ENCODE measurements at regions of chr12 and their contacts with region 1.

Region 1: DNA sequence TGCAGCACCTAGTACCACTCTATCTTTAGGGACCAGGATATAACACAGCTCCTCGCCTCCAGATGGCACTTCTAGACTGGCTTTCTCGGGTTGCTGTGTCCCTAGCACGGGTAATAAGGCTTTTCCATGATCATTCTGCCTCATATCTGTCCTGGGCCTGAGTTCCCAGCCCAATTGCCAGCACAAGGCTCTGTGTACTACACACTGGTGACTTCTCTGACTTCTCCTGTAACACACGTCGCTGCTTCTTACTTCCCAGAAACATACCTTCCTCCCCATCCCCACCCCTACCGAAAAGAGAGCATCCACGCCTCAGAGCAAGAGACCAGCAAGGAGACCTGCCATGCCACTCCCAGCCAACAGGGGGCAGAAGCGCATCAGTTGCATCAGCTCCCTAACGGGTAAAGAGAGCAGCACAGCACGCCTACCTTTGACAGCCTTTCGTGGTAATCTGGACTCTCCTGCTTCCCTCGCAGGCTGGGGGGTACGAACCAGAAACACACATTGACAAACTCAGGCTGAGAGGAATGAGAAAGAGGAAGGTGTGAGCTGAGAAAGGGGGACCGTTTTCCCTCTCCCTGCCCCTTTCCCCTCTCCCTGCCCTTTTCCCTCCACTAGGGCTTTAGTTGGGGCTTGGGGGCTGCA is 21.2 kb upstream of the ZNF740 start:
- DNase-seq: peak; percentile 76 to 91 (median 83)
- H3K4me3 ChIP-seq: no peak overlapping the region
- H3K4me3 Mint-ChIP-seq: no peak overlapping the region
- H3K27ac ChIP-seq: no peak overlapping the region
- H3K27ac Mint-ChIP-seq: peak overlapping the region in 6 of 8 donors; percentile 26 to 81 (median 42)
- H3K4me1 ChIP-seq: peaks cover 8% of the 10 kb centered on the region
- H3K4me1 Mint-ChIP-seq: peaks cover 6 to 8% (median 6%) of the 10 kb centered on the region in 3 donors
- H3K27me3 ChIP-seq: no peaks in the 10 kb centered on the region
- H3K27me3 Mint-ChIP-seq: no peaks in the 10 kb centered on the region

Region 2: GRCh38 chr12:53180220-53180930 is 21.1 kb after region 1 on chr12 and contains the starts of genes CSAD and ZNF740:
- CTCF ChIA-PET with region 1: interaction called, 30 read pairs
- POLR2A ChIA-PET with region 1: interaction called, 6 read pairs
- DNase-seq: peak; percentile 96 to 99 (median 97)
- H3K4me3 ChIP-seq: peak within 1 kb of the TSS; percentile 79
- H3K4me3 Mint-ChIP-seq: peak within 1 kb of the TSS; percentile 89 to 97 (median 93)
- H3K27ac ChIP-seq: peak within 1 kb of the TSS; percentile 86
- H3K27ac Mint-ChIP-seq: peak within 1 kb of the TSS; percentile 88 to 99 (median 96)
- H3K4me1 ChIP-seq: peaks cover 45% of the 10 kb centered on the region
- H3K4me1 Mint-ChIP-seq: peaks cover 51 to 56% (median 54%) of the 10 kb centered on the region in 3 donors
- H3K27me3 ChIP-seq: no peaks in the 10 kb centered on the region
- H3K27me3 Mint-ChIP-seq: no peaks in the 10 kb centered on the region
- total RNA-seq, gene CSAD: 15.8 to 18.7 TPM
- total RNA-seq, gene ZNF740: 50.4 to 52.0 TPM

Region 3: DNA sequence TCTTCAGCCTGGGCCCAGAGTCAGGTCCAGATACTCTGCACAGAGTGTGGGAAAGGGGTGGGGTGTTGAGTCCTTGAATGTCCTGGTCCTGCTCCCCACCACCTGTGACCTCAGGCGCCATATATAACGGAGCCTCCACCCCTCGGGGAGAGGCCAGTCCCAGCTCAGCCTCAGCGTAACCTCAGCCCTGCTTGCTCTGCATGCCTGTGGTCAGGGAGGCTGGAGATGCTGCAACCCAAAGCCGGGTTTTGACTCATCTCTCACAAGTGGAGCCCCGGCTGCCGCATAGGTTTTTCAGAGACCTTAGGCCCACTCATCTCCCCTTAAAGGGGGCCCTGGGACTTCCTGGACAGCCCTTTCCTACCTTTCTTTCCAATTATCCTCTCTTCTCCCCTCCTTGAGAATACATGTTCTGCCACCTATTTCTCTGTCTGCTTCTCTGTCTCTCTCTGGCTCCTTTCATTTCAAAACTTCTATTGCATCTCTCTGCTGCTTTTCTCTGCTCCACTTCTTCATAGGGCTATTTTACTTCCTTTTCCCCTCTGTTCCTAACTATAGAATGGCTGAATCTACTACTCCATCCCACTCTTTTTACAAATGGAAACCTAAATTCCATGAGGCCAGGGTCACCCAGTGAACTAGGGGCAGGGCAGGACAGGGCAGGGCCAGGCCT is 46.6 kb after region 1 on chr12:
- CTCF ChIA-PET with region 1: interaction called, 18 read pairs
- POLR2A ChIA-PET with region 1: no interaction called
- DNase-seq: peak in 3 of 5 donors; percentile 32 to 80 (median 42)
- H3K4me3 ChIP-seq: peak overlapping the region; percentile 93
- H3K4me3 Mint-ChIP-seq: peak overlapping the region; percentile 83 to 98 (median 89)
- H3K27ac ChIP-seq: peak overlapping the region; percentile 55
- H3K27ac Mint-ChIP-seq: peak overlapping the region; percentile 85 to 99 (median 90)
- H3K4me1 ChIP-seq: peaks cover 81% of the 10 kb centered on the region
- H3K4me1 Mint-ChIP-seq: peaks cover 70 to 94% (median 84%) of the 10 kb centered on the region in 3 donors
- H3K27me3 ChIP-seq: no peaks in the 10 kb centered on the region
- H3K27me3 Mint-ChIP-seq: peaks cover 0 to 1% of the 10 kb centered on the region in 2 donors

Region 4: DNA sequence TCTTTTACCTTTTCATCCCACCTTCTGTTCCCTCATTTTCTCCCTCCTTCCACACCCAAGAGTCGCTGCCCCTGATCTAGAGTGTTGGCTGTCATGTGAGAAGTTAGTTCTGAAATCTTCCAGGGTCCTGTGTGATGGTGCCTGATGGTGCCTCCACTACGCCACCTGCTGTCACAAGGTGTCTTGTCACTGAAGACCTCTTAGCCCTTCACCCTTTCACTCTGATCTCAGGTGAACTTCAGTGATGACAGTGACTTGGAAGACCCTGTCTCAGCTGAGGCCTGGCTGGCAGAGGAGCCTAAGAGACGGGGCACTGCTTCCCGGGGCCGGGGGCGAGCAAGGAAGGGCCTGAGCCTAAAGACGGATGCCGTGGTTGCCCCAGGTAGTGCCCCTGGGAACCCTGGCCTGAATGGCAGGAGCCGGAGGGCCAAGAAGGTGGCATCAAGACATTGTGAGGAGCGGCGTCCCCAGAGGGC is 128.5 kb after region 1 on chr12:
- CTCF ChIA-PET with region 1: interaction called, 50 read pairs
- POLR2A ChIA-PET with region 1: no interaction called
- DNase-seq: peak; percentile 57 to 84 (median 63)
- H3K4me3 ChIP-seq: no peak overlapping the region
- H3K4me3 Mint-ChIP-seq: no peak overlapping the region
- H3K27ac ChIP-seq: no peak overlapping the region
- H3K27ac Mint-ChIP-seq: peak overlapping the region in 4 of 8 donors; percentile 37 to 78 (median 70)
- H3K4me1 ChIP-seq: no peaks in the 10 kb centered on the region
- H3K4me1 Mint-ChIP-seq: peaks cover 4 to 5% (median 5%) of the 10 kb centered on the region in 3 donors
- H3K27me3 ChIP-seq: no peaks in the 10 kb centered on the region
- H3K27me3 Mint-ChIP-seq: no peaks in the 10 kb centered on the region

Region 5: GRCh38 chr12:53344824-53345485 is 185.6 kb after region 1 on chr12:
- CTCF ChIA-PET with region 1: interaction called, 17 read pairs
- POLR2A ChIA-PET with region 1: no interaction called
- DNase-seq: peak; percentile 53 to 80 (median 61)
- H3K4me3 ChIP-seq: peak overlapping the region; percentile 80
- H3K4me3 Mint-ChIP-seq: peak overlapping the region; percentile 90 to 98 (median 95)
- H3K27ac ChIP-seq: peak overlapping the region; percentile 4
- H3K27ac Mint-ChIP-seq: peak overlapping the region in 7 of 8 donors; percentile 75 to 95 (median 92)
- H3K4me1 ChIP-seq: peaks cover 9% of the 10 kb centered on the region
- H3K4me1 Mint-ChIP-seq: peaks cover 12 to 18% (median 14%) of the 10 kb centered on the region in 3 donors
- H3K27me3 ChIP-seq: no peaks in the 10 kb centered on the region
- H3K27me3 Mint-ChIP-seq: peaks cover 6 to 7% of the 10 kb centered on the region in 2 donors